Dendritic cell treated with granulocyte-macrophage colony-stimulating factor and Interleukin-4, amounts not matched to agents 40 ng/mL and 50 ng/mL, for 4 days (primary cell): ENCODE measurements at regions of chr19 and their contacts with region 1.

Region 1: DNA sequence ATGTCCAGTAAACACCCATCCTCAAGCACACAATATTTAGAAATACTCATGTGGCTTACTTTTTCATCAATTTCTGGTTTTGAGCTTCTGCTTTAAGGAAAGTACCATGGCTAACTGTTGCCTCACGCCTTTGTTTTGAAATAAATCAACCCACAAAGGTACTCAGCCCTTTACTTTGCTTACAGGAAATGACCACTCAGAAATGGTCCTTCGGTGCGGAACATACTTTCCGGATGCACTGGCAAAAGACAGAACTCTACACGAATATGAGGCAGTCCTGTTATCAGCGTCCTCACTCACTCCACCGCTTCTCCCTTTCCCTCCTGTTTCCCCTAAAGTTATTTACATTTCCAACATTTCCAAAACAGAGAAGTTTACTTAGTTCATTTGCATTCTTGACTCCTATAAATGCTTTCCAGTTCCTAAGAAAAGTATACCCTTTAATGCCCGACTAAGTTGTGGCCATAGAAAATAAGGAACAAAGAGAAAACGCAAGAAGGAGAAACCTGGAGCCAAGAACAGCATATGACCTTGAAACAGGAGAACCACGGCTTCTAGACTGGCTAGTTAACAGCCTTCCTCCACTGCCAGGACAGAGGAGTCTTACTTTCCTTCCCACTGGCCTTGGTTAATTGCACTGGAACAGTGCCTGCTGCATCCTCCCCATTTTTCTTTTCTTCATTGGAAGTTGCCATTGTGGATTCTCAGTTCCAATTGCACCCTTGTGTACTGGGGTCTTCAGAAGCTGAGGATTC is 10.6 kb downstream of the FPR2 start:
- H3K4me3 Mint-ChIP-seq: peak overlapping the region; percentile 32
- H3K27ac Mint-ChIP-seq: peak overlapping the region; percentile 72
- H3K4me1 Mint-ChIP-seq: peaks cover 42% of the 10 kb centered on the region
- H3K27me3 Mint-ChIP-seq: peaks cover 7% of the 10 kb centered on the region

Region 2: GRCh38 chr19:51735759-51736449 is 35.6 kb before region 1 on chr19:
- intact Hi-C with region 1: loop called (anchors 5 kb)
- H3K4me3 Mint-ChIP-seq: no peak overlapping the region
- H3K27ac Mint-ChIP-seq: no peak overlapping the region
- H3K4me1 Mint-ChIP-seq: peaks cover 37% of the 10 kb centered on the region
- H3K27me3 Mint-ChIP-seq: peaks cover 52% of the 10 kb centered on the region

Region 3: GRCh38 chr19:51746731-51747130 is 24.8 kb before region 1 on chr19:
- intact Hi-C with region 1: no loop called
- H3K4me3 Mint-ChIP-seq: no peak overlapping the region
- H3K27ac Mint-ChIP-seq: no peak overlapping the region
- H3K4me1 Mint-ChIP-seq: peaks cover 53% of the 10 kb centered on the region
- H3K27me3 Mint-ChIP-seq: peaks cover 5% of the 10 kb centered on the region

Region 4: GRCh38 chr19:52065399-52065798 is 293.8 kb after region 1 on chr19:
- intact Hi-C with region 1: no loop called
- H3K4me3 Mint-ChIP-seq: no peak overlapping the region
- H3K27ac Mint-ChIP-seq: no peak overlapping the region
- H3K4me1 Mint-ChIP-seq: no peaks in the 10 kb centered on the region
- H3K27me3 Mint-ChIP-seq: no peaks in the 10 kb centered on the region